ENCODE measurements at regions of chr7 and their contacts with region 1.

Region 1: GRCh38 chr7:134646425-134647305 is at the start of gene BPGM:
- DNase-seq: peak; percentile 92 to 100 (median 96)
- ATAC-seq: peak; percentile 91
- H3K4me3 ChIP-seq: peak within 1 kb of the TSS; percentile 88
- H3K4me3 Mint-ChIP-seq: no peak within 1 kb of the TSS
- H3K27ac ChIP-seq: peak within 1 kb of the TSS; percentile 92 to 93
- H3K27ac Mint-ChIP-seq: no peak within 1 kb of the TSS
- H3K4me1 ChIP-seq: peaks cover 25% of the 10 kb centered on the region
- H3K4me1 Mint-ChIP-seq: peaks cover 31% of the 10 kb centered on the region
- H3K27me3 ChIP-seq: no peaks in the 10 kb centered on the region
- H3K27me3 Mint-ChIP-seq: no peaks in the 10 kb centered on the region
- CTCF ChIP-seq: peak; percentile 65
- total RNA-seq, gene BPGM: 46.3 to 46.6 TPM

Region 2: DNA sequence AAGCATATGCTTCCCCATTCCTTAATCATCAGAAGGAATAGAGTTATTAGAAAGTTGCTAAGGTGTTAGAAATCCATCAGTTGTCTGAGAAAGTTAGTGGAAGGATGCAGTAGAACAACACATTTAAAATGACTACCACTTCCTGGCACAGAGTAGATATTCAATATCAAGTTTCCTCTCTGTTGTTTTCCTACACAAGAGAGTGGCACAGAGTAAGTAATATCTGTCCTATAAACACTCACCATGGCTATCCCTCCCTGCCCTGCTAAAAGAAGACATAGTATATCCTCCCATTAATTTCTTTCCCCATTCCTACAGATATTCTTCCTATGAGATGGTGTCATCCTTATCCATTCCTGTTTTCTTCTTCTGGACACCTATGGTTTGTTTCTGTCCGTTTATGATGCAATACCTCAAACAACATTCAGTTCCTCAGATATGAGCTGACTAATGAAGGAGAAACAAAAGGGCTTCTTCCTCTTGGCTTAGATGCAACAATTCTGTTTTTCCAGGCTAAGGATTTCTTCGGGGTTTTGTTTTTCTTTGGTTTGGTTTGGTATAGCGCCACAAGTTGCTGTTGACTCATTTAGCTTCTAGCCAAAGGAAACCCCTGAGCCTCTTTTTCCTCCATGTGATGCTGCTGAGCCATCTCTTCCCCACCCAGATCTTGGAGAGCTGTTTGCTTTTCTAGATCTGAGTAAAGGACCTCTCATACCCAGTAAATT is 32.9 kb before region 1 on chr7:
- CTCF ChIA-PET with region 1: no interaction called
- POLR2A ChIA-PET with region 1: no interaction called
- intact Hi-C with region 1: no loop called
- DNase-seq: no peak
- ATAC-seq: no peak
- H3K4me3 ChIP-seq: no peak overlapping the region
- H3K4me3 Mint-ChIP-seq: no peak overlapping the region
- H3K27ac ChIP-seq: no peak overlapping the region
- H3K27ac Mint-ChIP-seq: no peak overlapping the region
- H3K4me1 ChIP-seq: no peaks in the 10 kb centered on the region
- H3K4me1 Mint-ChIP-seq: no peaks in the 10 kb centered on the region
- H3K27me3 ChIP-seq: peaks cover 0 to 2% of the 10 kb centered on the region in 2 experiments
- H3K27me3 Mint-ChIP-seq: peaks cover 32% of the 10 kb centered on the region
- CTCF ChIP-seq: no peak

Region 3: GRCh38 chr7:134632937-134633540 is 13.6 kb before region 1 on chr7:
- CTCF ChIA-PET with region 1: interaction called, 40 read pairs
- POLR2A ChIA-PET with region 1: interaction called, 73 read pairs
- intact Hi-C with region 1: no loop called
- DNase-seq: peak in 11 of 14 experiments; percentile 7 to 82 (median 40)
- ATAC-seq: peak; percentile 97
- H3K4me3 ChIP-seq: no peak overlapping the region
- H3K4me3 Mint-ChIP-seq: no peak overlapping the region
- H3K27ac ChIP-seq: no peak overlapping the region
- H3K27ac Mint-ChIP-seq: no peak overlapping the region
- H3K4me1 ChIP-seq: peaks cover 6% of the 10 kb centered on the region
- H3K4me1 Mint-ChIP-seq: peaks cover 23% of the 10 kb centered on the region
- H3K27me3 ChIP-seq: peaks cover 3 to 5% of the 10 kb centered on the region in 2 experiments
- H3K27me3 Mint-ChIP-seq: peaks cover 11% of the 10 kb centered on the region
- CTCF ChIP-seq: peak; percentile 80

Region 4: GRCh38 chr7:134669845-134670373 is 23.2 kb after region 1 on chr7:
- CTCF ChIA-PET with region 1: interaction called, 31 read pairs
- POLR2A ChIA-PET with region 1: interaction called, 105 read pairs
- intact Hi-C with region 1: loop called (anchors 1 to 5 kb)
- DNase-seq: peak; percentile 77 to 96 (median 88)
- ATAC-seq: peak; percentile 93
- H3K4me3 ChIP-seq: peak overlapping the region; percentile 24
- H3K4me3 Mint-ChIP-seq: peak overlapping the region; percentile 85
- H3K27ac ChIP-seq: peak overlapping the region; percentile 74 to 87
- H3K27ac Mint-ChIP-seq: peak overlapping the region; percentile 89
- H3K4me1 ChIP-seq: peaks cover 18% of the 10 kb centered on the region
- H3K4me1 Mint-ChIP-seq: peaks cover 61% of the 10 kb centered on the region
- H3K27me3 ChIP-seq: no peaks in the 10 kb centered on the region
- H3K27me3 Mint-ChIP-seq: no peaks in the 10 kb centered on the region
- CTCF ChIP-seq: no peak

Region 5: GRCh38 chr7:134710859-134711624 is 64.4 kb after region 1 on chr7:
- CTCF ChIA-PET with region 1: interaction called, 7 read pairs
- POLR2A ChIA-PET with region 1: interaction called, 16 read pairs
- intact Hi-C with region 1: loop called in 1 of 2 experiments (anchors 1 kb)
- DNase-seq: peak; percentile 31 to 88 (median 61)
- ATAC-seq: peak; percentile 94
- H3K4me3 ChIP-seq: no peak overlapping the region
- H3K4me3 Mint-ChIP-seq: peak overlapping the region; percentile 25
- H3K27ac ChIP-seq: peak overlapping the region; percentile 68 to 73
- H3K27ac Mint-ChIP-seq: peak overlapping the region; percentile 84
- H3K4me1 ChIP-seq: peaks cover 13% of the 10 kb centered on the region
- H3K4me1 Mint-ChIP-seq: peaks cover 18% of the 10 kb centered on the region
- H3K27me3 ChIP-seq: no peaks in the 10 kb centered on the region
- H3K27me3 Mint-ChIP-seq: no peaks in the 10 kb centered on the region
- CTCF ChIP-seq: no peak

Region 6: GRCh38 chr7:134865001-134865845 is 218.6 kb after region 1 on chr7:
- CTCF ChIA-PET with region 1: no interaction called
- POLR2A ChIA-PET with region 1: interaction called, 7 read pairs
- intact Hi-C with region 1: loop called in 1 of 2 experiments (anchors 10 kb)
- DNase-seq: peak in 12 of 14 experiments; percentile 4 to 68 (median 29)
- ATAC-seq: peak; percentile 86
- H3K4me3 ChIP-seq: peak overlapping the region; percentile 46
- H3K4me3 Mint-ChIP-seq: peak overlapping the region; percentile 63
- H3K27ac ChIP-seq: peak overlapping the region; percentile 33 to 61
- H3K27ac Mint-ChIP-seq: peak overlapping the region; percentile 90
- H3K4me1 ChIP-seq: peaks cover 21% of the 10 kb centered on the region
- H3K4me1 Mint-ChIP-seq: peaks cover 50% of the 10 kb centered on the region
- H3K27me3 ChIP-seq: no peaks in the 10 kb centered on the region
- H3K27me3 Mint-ChIP-seq: no peaks in the 10 kb centered on the region
- CTCF ChIP-seq: no peak

Region 7: DNA sequence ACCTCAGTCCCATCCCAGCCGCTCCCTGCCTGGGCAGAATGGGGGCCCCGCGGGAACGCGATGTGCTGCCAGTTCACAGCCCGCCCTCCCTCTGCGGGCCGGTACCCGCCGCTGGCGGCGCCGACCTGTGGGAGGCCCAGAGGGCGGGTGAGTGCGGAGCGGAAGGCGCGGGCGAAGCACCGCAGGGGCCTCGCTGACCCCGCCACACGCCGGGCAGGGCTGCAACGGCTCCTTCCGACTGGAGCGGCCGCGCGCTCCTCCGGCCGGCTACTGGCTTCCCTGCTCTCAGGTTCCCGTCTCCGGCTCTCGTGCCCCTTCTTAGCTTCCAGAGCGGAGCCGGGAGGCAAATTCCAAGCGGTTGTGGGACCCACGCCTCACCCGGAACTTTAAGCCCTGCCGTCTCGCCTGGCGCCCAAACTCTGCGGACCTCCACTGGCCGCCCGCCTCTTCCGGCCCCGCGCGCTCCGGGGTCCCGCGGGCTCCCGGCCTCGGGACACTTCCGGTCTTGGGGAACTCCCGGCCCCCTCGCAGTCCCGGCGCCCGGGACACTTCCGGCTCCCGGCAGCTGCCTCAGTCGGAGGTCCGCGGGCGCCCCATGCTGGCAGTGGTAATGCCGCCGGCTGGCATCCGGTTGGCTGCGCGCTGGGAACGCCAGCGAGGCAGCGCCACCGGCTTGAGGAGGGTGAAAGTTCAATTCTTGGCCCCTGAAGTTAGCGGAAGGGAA is 523.8 kb after region 1 on chr7 and contains the start of gene CYREN:
- CTCF ChIA-PET with region 1: interaction called, 5 read pairs
- POLR2A ChIA-PET with region 1: interaction called, 13 read pairs
- intact Hi-C with region 1: loop called in 1 of 2 experiments (anchors 5 kb)
- DNase-seq: peak; percentile 75 to 95 (median 87)
- ATAC-seq: peak; percentile 77
- H3K4me3 ChIP-seq: peak within 1 kb of the TSS; percentile 82
- H3K4me3 Mint-ChIP-seq: peak within 1 kb of the TSS; percentile 91
- H3K27ac ChIP-seq: peak within 1 kb of the TSS; percentile 94
- H3K27ac Mint-ChIP-seq: peak within 1 kb of the TSS; percentile 94
- H3K4me1 ChIP-seq: peaks cover 47% of the 10 kb centered on the region
- H3K4me1 Mint-ChIP-seq: peaks cover 48% of the 10 kb centered on the region
- H3K27me3 ChIP-seq: no peaks in the 10 kb centered on the region
- H3K27me3 Mint-ChIP-seq: no peaks in the 10 kb centered on the region
- CTCF ChIP-seq: peak; percentile 76
- total RNA-seq, gene CYREN: 14.0 to 15.8 TPM

Region 8: DNA sequence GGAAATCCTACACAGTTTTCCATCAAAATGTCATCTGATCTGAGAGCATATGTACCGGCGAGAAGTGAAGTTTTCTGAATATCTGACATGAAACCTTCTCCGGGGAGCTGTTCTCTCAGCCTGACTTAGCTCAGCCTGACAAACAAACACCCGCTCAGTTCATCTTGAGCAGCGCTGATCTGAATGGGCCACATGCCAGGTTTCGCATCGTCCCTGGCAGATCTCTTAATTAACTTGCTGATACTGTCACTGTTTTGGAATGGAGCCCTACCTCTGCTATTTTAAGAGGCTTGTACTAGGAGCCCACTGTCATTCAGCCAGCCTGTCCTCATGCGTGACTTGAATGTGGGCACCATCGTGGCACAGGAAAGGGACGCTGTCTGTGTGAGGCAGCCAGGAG is 696.2 kb after region 1 on chr7:
- CTCF ChIA-PET with region 1: no interaction called
- POLR2A ChIA-PET with region 1: no interaction called
- intact Hi-C with region 1: no loop called
- DNase-seq: no peak
- ATAC-seq: no peak
- H3K4me3 ChIP-seq: no peak overlapping the region
- H3K4me3 Mint-ChIP-seq: no peak overlapping the region
- H3K27ac ChIP-seq: no peak overlapping the region
- H3K27ac Mint-ChIP-seq: no peak overlapping the region
- H3K4me1 ChIP-seq: no peaks in the 10 kb centered on the region
- H3K4me1 Mint-ChIP-seq: no peaks in the 10 kb centered on the region
- H3K27me3 ChIP-seq: no peaks in the 10 kb centered on the region
- H3K27me3 Mint-ChIP-seq: no peaks in the 10 kb centered on the region
- CTCF ChIP-seq: no peak

Region 9: DNA sequence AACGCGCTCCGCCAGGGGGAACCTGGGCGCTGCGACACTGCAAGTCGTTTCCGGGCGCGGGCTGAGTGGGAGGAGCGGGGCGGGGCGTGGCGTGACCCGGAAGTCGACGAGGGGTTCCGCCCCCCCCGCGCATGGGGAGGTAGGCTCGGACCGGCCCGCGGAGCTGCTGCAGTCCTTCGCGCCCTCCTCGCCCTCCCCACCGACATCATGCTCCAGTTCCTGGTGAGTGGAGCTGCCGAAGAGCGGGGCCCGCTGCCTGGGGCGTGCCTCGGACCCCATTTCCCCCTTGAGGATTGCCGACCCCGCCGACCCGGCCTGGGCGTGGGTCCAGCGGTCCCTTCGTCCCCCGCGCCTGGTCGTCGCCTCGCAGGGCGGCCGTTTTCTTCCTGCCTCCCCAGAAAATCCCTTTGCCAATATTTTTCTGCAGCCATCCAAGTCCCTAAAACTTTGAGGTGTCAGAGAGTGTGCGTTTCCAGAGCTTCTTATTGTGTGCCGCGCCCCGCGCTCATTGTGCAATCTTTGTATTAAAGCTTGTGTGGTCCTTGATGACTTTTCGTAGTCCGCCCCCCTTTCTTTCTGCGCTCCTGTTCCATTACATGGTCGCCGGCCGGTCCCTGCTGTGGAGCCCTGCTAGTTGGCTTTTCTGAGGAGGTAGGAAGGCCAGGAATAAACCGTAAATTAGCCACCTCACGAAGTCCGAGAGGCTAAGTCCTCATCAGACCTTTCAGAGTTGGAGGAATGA is 1015.9 kb after region 1 on chr7 and contains the start of gene STMP1:
- CTCF ChIA-PET with region 1: no interaction called
- POLR2A ChIA-PET with region 1: no interaction called
- intact Hi-C with region 1: loop called in 1 of 2 experiments (anchors 2 kb)
- DNase-seq: peak; percentile 93 to 98 (median 96)
- ATAC-seq: peak; percentile 97
- H3K4me3 ChIP-seq: peak within 1 kb of the TSS; percentile 89
- H3K4me3 Mint-ChIP-seq: peak within 1 kb of the TSS; percentile 93
- H3K27ac ChIP-seq: peak within 1 kb of the TSS; percentile 47 to 53
- H3K27ac Mint-ChIP-seq: peak within 1 kb of the TSS; percentile 81
- H3K4me1 ChIP-seq: peaks cover 23% of the 10 kb centered on the region
- H3K4me1 Mint-ChIP-seq: peaks cover 48% of the 10 kb centered on the region
- H3K27me3 ChIP-seq: no peaks in the 10 kb centered on the region
- H3K27me3 Mint-ChIP-seq: no peaks in the 10 kb centered on the region
- CTCF ChIP-seq: no peak
- total RNA-seq, gene STMP1: 11.5 to 14.1 TPM